H1 (cell line): ENCODE measurements at regions of chr16 and their contacts with region 1.

Region 1: GRCh38 chr16:78778101-78779004 is 678.9 kb downstream of the WWOX start:
- DNase-seq: no peak
- H3K4me3 ChIP-seq: no peak overlapping the region
- H3K27ac ChIP-seq: no peak overlapping the region
- H3K4me1 ChIP-seq: peaks cover 0 to 2% (median 0%) of the 10 kb centered on the region in 4 experiments; a peak in 1 of 7 replicates
- H3K27me3 ChIP-seq: no peaks in the 10 kb centered on the region
- CTCF ChIP-seq: no peak
- EP300 ChIP-seq: no peak
- POLR2A ChIP-seq: no peak
- RAD21 ChIP-seq: no peak

Region 2: DNA sequence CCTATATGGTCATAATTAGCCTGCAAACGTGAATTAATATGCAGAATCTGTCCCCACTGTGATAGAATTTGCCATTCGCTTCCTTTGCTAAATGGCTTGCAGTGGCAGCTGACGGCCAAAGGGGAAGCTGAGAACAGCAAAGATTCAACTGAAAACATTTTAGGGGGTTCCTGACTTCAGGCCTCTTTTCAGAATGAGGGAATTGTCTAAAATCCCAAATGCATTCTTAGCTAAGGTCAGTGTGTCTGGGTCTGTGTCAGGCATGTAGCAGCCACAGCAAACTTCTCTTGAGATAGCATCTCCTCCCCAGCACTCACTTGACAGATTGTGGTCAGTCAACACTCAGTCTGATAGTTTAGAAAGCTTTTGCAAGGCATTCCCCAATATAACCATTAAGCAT is 22.2 kb after region 1 on chr16:
- CTCF ChIA-PET with region 1: interaction called, 30 read pairs
- POLR2A ChIA-PET with region 1: no interaction called
- DNase-seq: no peak
- H3K4me3 ChIP-seq: no peak overlapping the region
- H3K27ac ChIP-seq: no peak overlapping the region
- H3K4me1 ChIP-seq: peaks cover 0 to 6% (median 1%) of the 10 kb centered on the region in 4 experiments; a peak in 2 of 7 replicates
- H3K27me3 ChIP-seq: no peaks in the 10 kb centered on the region
- CTCF ChIP-seq: peak; percentile 28 to 60 (median 42); a peak in 3 of 4 replicates
- EP300 ChIP-seq: no peak
- POLR2A ChIP-seq: no peak
- RAD21 ChIP-seq: peak; percentile 43 to 53; a peak in 3 of 4 replicates